Natural killer cell (primary cell): ENCODE measurements at regions of chr5 and their contacts with region 1.

Region 1: DNA sequence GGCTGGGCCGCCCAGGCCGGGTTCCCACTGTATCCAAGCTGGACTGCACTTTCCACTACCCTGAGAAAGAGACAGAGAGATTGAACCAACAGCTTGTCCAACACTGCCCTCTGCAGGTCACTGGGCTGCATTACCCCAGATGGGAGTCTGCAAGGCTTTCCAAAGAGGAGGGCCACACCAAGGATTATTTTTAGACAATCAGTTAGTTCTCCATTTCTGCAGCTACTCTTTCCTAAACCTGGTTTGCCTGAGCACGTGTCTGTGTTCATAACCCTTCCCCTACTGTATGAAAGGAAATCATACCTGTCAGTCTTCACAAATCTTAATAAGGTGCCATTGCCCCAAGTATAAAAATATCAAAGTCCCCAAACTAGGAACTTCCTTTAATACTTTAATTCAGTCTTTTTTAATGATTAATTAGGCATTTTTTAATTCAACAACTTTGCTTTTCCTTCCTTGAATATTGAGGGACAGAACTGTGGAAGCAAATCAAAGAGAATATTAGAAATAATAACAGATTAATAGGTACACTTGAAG is 13.4 kb upstream of the FGF1 start:
- DNase-seq: peak; percentile 64 to 85
- ATAC-seq: peak; percentile 88 to 97 (median 88)
- H3K4me3 ChIP-seq: no peak overlapping the region
- H3K4me3 Mint-ChIP-seq: no peak overlapping the region
- H3K27ac ChIP-seq: no peak overlapping the region
- H3K27ac Mint-ChIP-seq: no peak overlapping the region
- H3K4me1 ChIP-seq: no peaks in the 10 kb centered on the region
- H3K4me1 Mint-ChIP-seq: no peaks in the 10 kb centered on the region
- H3K27me3 ChIP-seq: no peaks in the 10 kb centered on the region
- H3K27me3 Mint-ChIP-seq: peaks cover 0 to 17% of the 10 kb centered on the region in 2 donors
- CTCF ChIP-seq: peak; percentile 90

Region 2: DNA sequence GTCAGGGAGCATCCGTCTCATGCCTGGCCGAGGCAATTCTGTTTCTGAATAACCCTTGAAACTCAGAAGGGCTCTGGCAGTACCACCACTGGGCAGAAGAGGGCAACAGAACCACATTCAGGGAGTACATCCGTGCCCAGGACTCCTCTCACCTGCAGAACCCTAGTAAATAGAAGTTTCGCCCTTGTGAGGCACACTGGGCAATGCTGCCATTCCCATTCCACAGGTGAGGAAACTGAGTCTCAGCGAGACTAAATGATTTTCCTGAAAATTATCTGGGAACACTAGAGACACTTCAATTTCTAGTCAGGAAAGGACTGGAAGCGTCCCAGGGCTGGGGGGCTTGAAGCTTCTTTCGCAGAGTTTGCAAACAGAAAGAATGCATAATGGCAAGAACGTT is 88.1 kb before region 1 on chr5:
- intact Hi-C with region 1: loop called (anchors 1 kb)
- DNase-seq: peak; percentile 44 to 74
- ATAC-seq: peak; percentile 68 to 93 (median 76)
- H3K4me3 ChIP-seq: no peak overlapping the region
- H3K4me3 Mint-ChIP-seq: no peak overlapping the region
- H3K27ac ChIP-seq: no peak overlapping the region
- H3K27ac Mint-ChIP-seq: no peak overlapping the region
- H3K4me1 ChIP-seq: no peaks in the 10 kb centered on the region
- H3K4me1 Mint-ChIP-seq: peaks cover 4 to 5% of the 10 kb centered on the region in 2 donors
- H3K27me3 ChIP-seq: no peaks in the 10 kb centered on the region
- H3K27me3 Mint-ChIP-seq: peaks cover 20 to 58% of the 10 kb centered on the region in 2 donors
- CTCF ChIP-seq: peak; percentile 68

Region 3: DNA sequence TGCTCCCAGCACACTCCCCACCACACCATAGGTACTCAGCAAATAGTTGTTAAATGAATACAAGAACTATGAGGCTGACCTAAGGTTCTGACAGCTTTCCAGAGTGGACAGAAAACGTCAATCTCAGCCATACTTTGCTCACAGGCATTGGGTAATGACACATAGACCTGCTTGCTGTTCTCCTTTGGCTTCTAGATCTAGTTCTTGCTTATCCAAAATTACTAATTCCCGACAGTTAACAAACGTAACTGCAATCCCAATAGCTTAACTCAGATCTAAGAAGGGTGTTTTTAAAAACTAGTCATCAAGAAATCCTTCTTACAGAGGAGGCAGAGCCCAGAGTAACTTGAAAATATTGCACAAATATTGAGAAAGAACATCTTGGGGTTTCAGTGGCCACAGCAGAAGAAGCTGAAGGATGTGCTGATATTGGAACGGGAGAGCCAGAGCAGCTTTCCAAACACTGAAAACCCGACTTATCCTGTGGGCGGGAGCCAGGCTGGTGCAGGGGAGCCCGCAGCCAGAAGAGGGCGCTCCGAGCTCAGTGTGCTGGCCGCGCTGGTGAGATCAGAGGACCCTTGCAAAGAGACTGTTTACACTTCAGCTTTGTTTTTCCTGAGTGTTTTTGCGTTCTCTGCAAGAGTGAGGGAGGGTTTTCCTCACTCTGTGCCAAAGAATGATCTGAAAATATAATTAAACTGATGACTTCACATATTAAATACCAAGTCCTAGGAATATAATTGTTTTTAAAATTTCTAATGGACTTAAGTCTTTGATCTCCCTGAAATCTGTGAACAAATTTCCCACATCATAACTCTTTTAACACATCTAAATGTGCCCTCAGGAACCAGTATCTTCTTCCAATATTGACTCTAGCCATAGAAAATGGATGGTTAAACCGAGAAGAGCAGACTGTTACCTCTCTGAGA is 43.6 kb before region 1 on chr5:
- intact Hi-C with region 1: loop called (anchors 1 kb)
- DNase-seq: peak; percentile 61 to 79
- ATAC-seq: peak; percentile 78 to 97 (median 92)
- H3K4me3 ChIP-seq: no peak overlapping the region
- H3K4me3 Mint-ChIP-seq: no peak overlapping the region
- H3K27ac ChIP-seq: no peak overlapping the region
- H3K27ac Mint-ChIP-seq: no peak overlapping the region
- H3K4me1 ChIP-seq: no peaks in the 10 kb centered on the region
- H3K4me1 Mint-ChIP-seq: no peaks in the 10 kb centered on the region
- H3K27me3 ChIP-seq: peaks cover 2% of the 10 kb centered on the region
- H3K27me3 Mint-ChIP-seq: peaks cover 12 to 17% of the 10 kb centered on the region in 2 donors
- CTCF ChIP-seq: peak; percentile 87

Region 4: GRCh38 chr5:142800776-142801494 is 101.7 kb after region 1 on chr5:
- intact Hi-C with region 1: no loop called
- DNase-seq: peak; percentile 29 to 78
- ATAC-seq: peak; percentile 60 to 72 (median 61)
- H3K4me3 ChIP-seq: no peak overlapping the region
- H3K4me3 Mint-ChIP-seq: peak overlapping the region; percentile 77
- H3K27ac ChIP-seq: peak overlapping the region; percentile 61
- H3K27ac Mint-ChIP-seq: peak overlapping the region; percentile 83 to 90
- H3K4me1 ChIP-seq: peaks cover 49% of the 10 kb centered on the region
- H3K4me1 Mint-ChIP-seq: peaks cover 77 to 84% of the 10 kb centered on the region in 2 donors
- H3K27me3 ChIP-seq: no peaks in the 10 kb centered on the region
- H3K27me3 Mint-ChIP-seq: no peaks in the 10 kb centered on the region
- CTCF ChIP-seq: no peak

Region 5: GRCh38 chr5:142915813-142916424 is 216.7 kb after region 1 on chr5:
- intact Hi-C with region 1: no loop called
- DNase-seq: peak in 1 of 2 donors; percentile 29
- ATAC-seq: no peak
- H3K4me3 ChIP-seq: no peak overlapping the region
- H3K4me3 Mint-ChIP-seq: no peak overlapping the region
- H3K27ac ChIP-seq: no peak overlapping the region
- H3K27ac Mint-ChIP-seq: peak overlapping the region in 1 of 2 donors; percentile 33
- H3K4me1 ChIP-seq: no peaks in the 10 kb centered on the region
- H3K4me1 Mint-ChIP-seq: peaks cover 27 to 35% of the 10 kb centered on the region in 2 donors
- H3K27me3 ChIP-seq: no peaks in the 10 kb centered on the region
- H3K27me3 Mint-ChIP-seq: no peaks in the 10 kb centered on the region
- CTCF ChIP-seq: no peak